ENCODE measurements at regions of chr2 and their contacts with region 1.

Region 1: GRCh38 chr2:174465327-174465726 is 21.5 kb downstream of the GPR155 start:
- DNase-seq: no peak
- ATAC-seq: no peak
- H3K4me3 ChIP-seq: no peak overlapping the region
- H3K27ac ChIP-seq: no peak overlapping the region
- H3K4me1 ChIP-seq: no peaks in the 10 kb centered on the region
- H3K27me3 ChIP-seq: no peaks in the 10 kb centered on the region
- CTCF ChIP-seq: peak; percentile 13; the same call in 1 of the 2 replicates

Region 2: DNA sequence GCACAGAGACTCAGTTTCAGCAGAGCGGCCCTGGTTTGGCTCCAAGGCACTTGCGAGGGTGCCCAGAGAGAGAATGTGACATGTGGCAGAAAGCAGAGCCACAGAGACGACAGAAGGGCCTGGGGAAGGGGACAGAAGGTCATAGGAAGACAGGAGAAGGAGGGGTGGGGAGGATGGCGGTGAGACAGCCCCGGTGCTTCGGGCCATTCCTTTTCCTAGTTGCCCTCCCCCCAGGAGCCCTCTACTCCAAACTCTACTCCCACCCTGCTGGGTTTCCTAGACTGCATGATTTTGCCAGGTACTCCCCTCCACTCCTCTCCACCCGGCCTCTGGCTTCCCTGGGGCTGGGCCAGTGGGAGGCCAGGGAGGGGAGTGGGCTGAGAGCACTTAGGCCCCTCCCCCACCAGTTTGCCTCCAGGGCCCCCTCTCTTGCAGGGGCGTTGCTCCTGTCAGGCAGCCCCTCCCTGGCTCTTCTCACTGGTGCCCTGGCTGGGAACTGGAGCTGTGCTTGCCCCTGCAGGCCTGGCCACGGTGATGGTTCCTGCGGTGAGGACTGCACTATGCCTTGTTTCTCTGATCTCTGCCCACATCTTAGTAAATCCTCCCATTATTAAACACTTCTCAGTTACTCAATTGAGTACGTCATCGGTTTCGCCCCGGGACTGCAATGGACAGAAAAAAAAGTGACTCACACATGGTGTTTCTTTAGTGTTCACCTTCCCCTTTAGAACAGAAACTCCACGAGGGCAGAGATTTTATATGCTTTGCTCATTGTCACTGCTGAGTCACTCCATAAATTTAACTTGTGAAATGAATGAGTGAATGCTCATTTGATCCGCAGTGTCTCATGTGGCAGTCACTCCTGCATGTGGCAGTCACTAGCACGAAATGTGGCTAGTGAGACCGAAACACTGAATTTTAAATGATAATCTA is 441.5 kb before region 1 on chr2:
- CTCF ChIA-PET with region 1: no interaction called
- POLR2A ChIA-PET with region 1: no interaction called
- intact Hi-C with region 1: no loop called
- DNase-seq: peak; percentile 91
- ATAC-seq: peak; percentile 59; the same call in 1 of the 2 replicates
- H3K4me3 ChIP-seq: no peak overlapping the region
- H3K27ac ChIP-seq: peak overlapping the region; percentile 97
- H3K4me1 ChIP-seq: peaks cover 12% of the 10 kb centered on the region; the same call in 1 of the 2 replicates
- H3K27me3 ChIP-seq: no peaks in the 10 kb centered on the region
- CTCF ChIP-seq: no peak

Region 3: DNA sequence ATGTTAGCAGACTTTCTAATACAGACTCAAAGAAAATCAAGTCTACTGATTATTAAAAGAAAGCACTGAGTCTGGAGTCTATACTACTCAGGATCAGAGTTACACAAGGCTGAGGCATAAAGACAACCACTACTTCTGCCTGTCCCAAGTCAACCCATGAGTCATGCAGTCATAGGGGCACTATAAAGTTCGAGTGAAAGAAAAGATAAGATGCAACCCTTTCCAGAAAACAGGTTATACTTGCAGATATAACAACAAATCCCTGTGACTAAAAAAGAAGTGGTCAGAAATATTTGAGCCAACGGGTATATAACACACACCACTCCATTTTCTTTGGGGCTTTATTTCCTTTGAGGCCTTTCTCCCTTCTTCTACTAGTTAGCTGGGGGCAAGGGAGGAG is 88.4 kb before region 1 on chr2:
- CTCF ChIA-PET with region 1: no interaction called
- POLR2A ChIA-PET with region 1: no interaction called
- intact Hi-C with region 1: no loop called
- DNase-seq: peak; percentile 62
- ATAC-seq: peak; percentile 71
- H3K4me3 ChIP-seq: no peak overlapping the region
- H3K27ac ChIP-seq: no peak overlapping the region
- H3K4me1 ChIP-seq: 0 out of 2 replicates have a peak, but pooled peaks cover 7% of the 10 kb centered on the region
- H3K27me3 ChIP-seq: no peaks in the 10 kb centered on the region
- CTCF ChIP-seq: no peak

Region 4: GRCh38 chr2:174522553-174522952 is 57.2 kb after region 1 on chr2:
- CTCF ChIA-PET with region 1: interaction called, 4 read pairs
- POLR2A ChIA-PET with region 1: no interaction called
- intact Hi-C with region 1: loop called (anchors 1 kb)
- DNase-seq: peak; percentile 35
- ATAC-seq: no peak
- H3K4me3 ChIP-seq: no peak overlapping the region
- H3K27ac ChIP-seq: no peak overlapping the region
- H3K4me1 ChIP-seq: no peaks in the 10 kb centered on the region
- H3K27me3 ChIP-seq: peaks cover 40% of the 10 kb centered on the region
- CTCF ChIP-seq: peak; percentile 59; the same call in 1 of the 2 replicates

Region 5: DNA sequence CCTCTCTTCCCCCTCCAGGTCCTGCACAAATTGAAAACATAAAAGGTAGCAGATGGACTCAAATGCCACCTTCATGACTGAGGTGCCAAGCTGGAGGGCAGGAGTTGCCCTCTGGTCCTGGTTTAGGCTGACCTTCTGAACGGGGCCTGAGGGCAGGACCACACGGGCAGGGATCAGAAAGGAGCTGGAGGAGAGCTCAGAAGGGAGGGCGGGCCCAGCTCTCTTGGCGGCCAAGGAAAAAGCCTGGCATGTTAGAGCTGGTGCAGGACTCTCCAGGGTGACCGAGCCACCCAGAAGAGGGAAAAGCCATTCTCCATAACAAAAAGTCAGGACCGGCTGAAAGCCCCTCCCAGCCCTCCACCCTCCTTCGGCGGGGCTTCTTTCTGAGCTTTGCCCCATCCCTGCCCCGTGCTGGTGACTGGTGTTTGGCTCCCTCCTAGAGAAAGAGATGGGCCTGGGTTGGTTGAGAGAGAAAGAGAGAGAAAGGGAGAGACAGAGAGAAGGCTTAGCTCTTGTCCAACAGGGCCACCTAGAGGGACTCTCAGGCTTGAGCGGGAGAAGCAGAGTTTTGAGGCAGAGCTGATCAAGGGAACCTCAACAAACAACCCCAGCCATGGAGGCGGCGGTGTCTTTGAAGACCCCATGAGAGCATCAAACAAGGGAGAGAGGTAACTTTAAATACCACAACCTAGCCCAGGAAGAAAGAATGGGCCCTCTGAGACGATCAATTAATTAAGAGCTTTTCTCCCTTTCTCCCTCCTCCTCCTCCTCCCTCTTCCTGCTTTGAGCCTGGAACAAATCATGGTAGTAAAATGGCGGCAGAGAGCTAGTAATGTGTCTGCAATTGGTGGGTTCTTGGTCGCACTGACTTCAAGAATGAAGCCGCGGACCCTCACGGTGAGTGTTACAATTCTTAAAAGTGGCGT is 81.5 kb after region 1 on chr2:
- CTCF ChIA-PET with region 1: interaction called, 12 read pairs
- POLR2A ChIA-PET with region 1: no interaction called
- intact Hi-C with region 1: loop called (anchors 1 kb)
- DNase-seq: peak; percentile 45
- ATAC-seq: peak; percentile 70
- H3K4me3 ChIP-seq: no peak overlapping the region
- H3K27ac ChIP-seq: no peak overlapping the region
- H3K4me1 ChIP-seq: no peaks in the 10 kb centered on the region
- H3K27me3 ChIP-seq: no peaks in the 10 kb centered on the region
- CTCF ChIP-seq: peak; percentile 57

Region 6: DNA sequence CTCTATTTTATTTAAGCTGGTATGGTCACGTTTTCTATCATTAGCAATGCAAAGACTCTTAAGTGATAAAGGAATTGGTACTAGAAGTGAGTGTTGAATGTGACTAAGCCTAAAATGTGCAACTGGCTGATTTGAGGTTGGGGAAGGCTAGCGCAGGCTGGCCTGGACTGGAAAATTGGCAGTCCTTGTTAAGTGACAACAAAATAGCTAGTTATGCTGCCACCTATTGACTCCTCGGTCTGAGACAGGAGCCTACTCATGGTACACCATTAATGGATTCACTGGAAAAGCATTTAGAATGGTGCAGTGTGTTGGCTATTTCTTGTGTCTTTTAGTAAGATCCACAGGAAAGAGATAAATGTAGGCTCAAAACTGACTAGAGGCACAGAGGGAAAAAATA is 138.0 kb after region 1 on chr2:
- CTCF ChIA-PET with region 1: interaction called, 3 read pairs
- POLR2A ChIA-PET with region 1: no interaction called
- intact Hi-C with region 1: loop called (anchors 1 kb)
- DNase-seq: peak; percentile 46
- ATAC-seq: peak; percentile 52
- H3K4me3 ChIP-seq: no peak overlapping the region
- H3K27ac ChIP-seq: no peak overlapping the region
- H3K4me1 ChIP-seq: peaks cover 15% of the 10 kb centered on the region
- H3K27me3 ChIP-seq: no peaks in the 10 kb centered on the region
- CTCF ChIP-seq: peak; percentile 75

Region 7: DNA sequence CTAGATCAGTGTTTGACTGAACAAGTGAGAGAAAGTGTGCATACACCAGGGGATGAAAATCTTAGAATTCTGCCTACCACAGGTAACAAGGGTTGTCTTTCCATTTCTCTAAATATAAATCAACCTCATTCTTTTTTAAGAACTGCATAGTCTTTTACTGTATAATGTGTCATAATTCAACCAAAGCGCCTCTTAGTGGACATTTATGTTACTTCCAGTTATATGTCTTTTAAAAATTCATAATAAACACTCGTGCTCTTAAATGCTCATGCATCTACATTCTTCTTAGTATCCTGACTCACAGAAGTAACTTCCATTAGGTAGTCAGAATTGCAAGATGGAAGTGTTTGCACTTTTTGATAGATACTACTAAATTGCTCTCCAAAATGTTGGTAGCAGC is 222.8 kb after region 1 on chr2:
- CTCF ChIA-PET with region 1: interaction called, 15 read pairs
- POLR2A ChIA-PET with region 1: no interaction called
- intact Hi-C with region 1: loop called (anchors 2 kb)
- DNase-seq: peak; percentile 60
- ATAC-seq: peak; percentile 74
- H3K4me3 ChIP-seq: no peak overlapping the region
- H3K27ac ChIP-seq: no peak overlapping the region
- H3K4me1 ChIP-seq: no peaks in the 10 kb centered on the region
- H3K27me3 ChIP-seq: peaks cover 30% of the 10 kb centered on the region
- CTCF ChIP-seq: peak; percentile 69

Measured in PC-3 (cell line).